Body of pancreas (tissue), 4 donors: ENCODE measurements at regions of chr22 and their contacts with region 1.

Region 1: DNA sequence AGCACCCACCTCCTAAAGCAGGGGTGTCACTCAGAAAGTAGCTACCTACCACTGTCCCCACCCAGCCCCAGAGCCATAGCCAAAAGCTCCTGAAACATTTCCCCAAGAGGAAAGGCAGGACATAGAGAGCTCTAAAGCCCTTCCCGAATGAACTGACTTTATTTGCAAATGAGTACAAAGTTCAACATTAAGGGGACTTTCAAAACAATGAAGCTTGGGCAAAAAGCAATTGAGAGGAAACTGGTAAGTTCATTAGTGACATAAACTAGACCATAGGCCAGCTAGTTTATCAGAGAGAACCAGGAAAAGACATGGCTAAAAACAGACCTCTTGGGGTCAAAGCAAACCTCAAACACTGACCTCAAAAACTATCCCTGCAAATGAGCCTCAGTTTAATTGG is 72.7 kb downstream of the IGLL5 start:
- DNase-seq: no peak
- ATAC-seq: no peak
- H3K4me3 ChIP-seq: no peak overlapping the region
- H3K27ac ChIP-seq: no peak overlapping the region
- H3K4me1 ChIP-seq: no peaks in the 10 kb centered on the region
- H3K27me3 ChIP-seq: no peaks in the 10 kb centered on the region
- CTCF ChIP-seq: no peak
- POLR2A ChIP-seq: no peak

Region 2: GRCh38 chr22:22156716-22157347 is 803.5 kb before region 1 on chr22:
- intact Hi-C with region 1: no loop called
- DNase-seq: peak; percentile 70 to 85 (median 78)
- ATAC-seq: peak; percentile 79
- H3K4me3 ChIP-seq: no peak overlapping the region
- H3K27ac ChIP-seq: no peak overlapping the region
- H3K4me1 ChIP-seq: peaks cover 5% of the 10 kb centered on the region
- H3K27me3 ChIP-seq: no peaks in the 10 kb centered on the region
- CTCF ChIP-seq: peak in 6 of 7 experiments; percentile 52 to 70 (median 66)
- POLR2A ChIP-seq: peak in 1 of 3 donors; percentile 25

Region 3: GRCh38 chr22:23128269-23129108 is 168.2 kb after region 1 on chr22:
- intact Hi-C with region 1: loop called (anchors 5 kb)
- DNase-seq: peak; percentile 69 to 78 (median 70)
- ATAC-seq: peak; percentile 72
- H3K4me3 ChIP-seq: no peak overlapping the region
- H3K27ac ChIP-seq: no peak overlapping the region
- H3K4me1 ChIP-seq: no peaks in the 10 kb centered on the region
- H3K27me3 ChIP-seq: no peaks in the 10 kb centered on the region
- CTCF ChIP-seq: peak; percentile 30 to 80 (median 68)
- POLR2A ChIP-seq: no peak